ENCODE measurements at regions of chr19 and their contacts with region 1.

Region 1: GRCh38 chr19:12815088-12815487 is 8.7 kb downstream of the RNASEH2A start:
- H3K4me3 ChIP-seq: no peak overlapping the region
- H3K27ac ChIP-seq: no peak overlapping the region
- H3K4me1 ChIP-seq: no peaks in the 10 kb centered on the region
- CTCF ChIP-seq: no peak

Region 2: GRCh38 chr19:12825254-12826131 is 10.4 kb after region 1 on chr19:
- CTCF ChIA-PET with region 1: interaction called, 13 read pairs
- POLR2A ChIA-PET with region 1: no interaction called
- H3K4me3 ChIP-seq: no peak overlapping the region
- H3K27ac ChIP-seq: no peak overlapping the region
- H3K4me1 ChIP-seq: no peaks in the 10 kb centered on the region
- CTCF ChIP-seq: no peak